ENCODE measurements at regions of chr15 and their contacts with region 1.

Region 1: DNA sequence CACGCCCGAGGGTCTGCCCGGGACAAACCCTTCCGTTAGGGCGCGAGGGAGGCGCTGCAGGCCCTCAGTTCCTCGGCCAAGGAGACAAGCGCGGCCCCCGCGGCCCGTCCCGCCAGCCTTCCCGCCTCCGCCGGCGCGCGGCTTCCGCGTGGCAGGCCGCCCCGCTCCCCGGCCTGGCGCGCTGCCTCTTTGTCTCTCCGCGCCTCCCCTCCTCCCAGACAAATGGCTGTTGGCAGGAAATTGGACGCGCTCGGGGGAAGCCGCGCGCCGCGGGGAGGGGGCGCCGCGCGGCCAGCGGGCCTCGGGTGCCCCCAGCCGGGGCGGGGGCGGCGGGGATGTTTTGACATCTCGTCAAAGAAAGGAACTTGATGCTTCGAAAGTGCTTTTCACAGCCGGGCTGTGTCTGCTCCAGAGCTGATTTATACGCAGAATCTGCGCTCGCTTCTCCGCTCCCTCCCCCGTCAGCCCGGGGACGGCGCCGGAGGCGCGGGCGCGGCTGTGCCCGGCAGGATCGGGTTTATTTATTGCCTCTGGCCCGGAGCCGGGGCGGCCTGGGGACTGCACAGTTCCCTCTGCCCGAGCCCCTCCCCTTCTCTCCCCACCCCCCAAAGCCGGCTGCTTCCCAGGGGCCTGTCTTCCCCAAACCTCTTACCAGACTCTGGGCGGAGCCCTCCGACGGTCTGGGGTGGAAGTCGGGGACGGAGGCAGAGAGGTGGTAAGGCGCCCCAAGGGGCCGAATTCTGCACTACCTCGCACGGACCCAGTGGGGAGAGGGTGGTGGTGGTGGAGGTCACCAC is 20.7 kb downstream of the SHF start:
- DNase-seq: peak; percentile 59 to 89 (median 77)
- H3K4me3 ChIP-seq: peak overlapping the region; percentile 59 to 91 (median 75)
- H3K27ac ChIP-seq: peak overlapping the region; percentile 96 to 100 (median 99)
- H3K27me3 ChIP-seq: no peaks in the 10 kb centered on the region
- CTCF ChIP-seq: peak in 54 of 56 donors; percentile 18 to 70 (median 48)

Region 2: GRCh38 chr15:44775953-44776352 is 391.1 kb before region 1 on chr15:
- intact Hi-C with region 1: no loop called
- DNase-seq: peak in 9 of 10 donors; percentile 49 to 84 (median 64)
- H3K4me3 ChIP-seq: peak overlapping the region in 8 of 59 donors; percentile 8 to 32 (median 16)
- H3K27ac ChIP-seq: peak overlapping the region in 56 of 59 donors; percentile 1 to 89 (median 66)
- H3K27me3 ChIP-seq: no peaks in the 10 kb centered on the region
- CTCF ChIP-seq: peak in 3 of 56 donors; percentile 7 to 19 (median 12)

Region 3: GRCh38 chr15:45156744-45157455 is 10.1 kb before region 1 on chr15:
- intact Hi-C with region 1: no loop called
- DNase-seq: no peak
- H3K4me3 ChIP-seq: no peak overlapping the region
- H3K27ac ChIP-seq: peak overlapping the region in 58 of 59 donors; percentile 38 to 92 (median 80)
- H3K27me3 ChIP-seq: no peaks in the 10 kb centered on the region
- CTCF ChIP-seq: no peak

Region 4: DNA sequence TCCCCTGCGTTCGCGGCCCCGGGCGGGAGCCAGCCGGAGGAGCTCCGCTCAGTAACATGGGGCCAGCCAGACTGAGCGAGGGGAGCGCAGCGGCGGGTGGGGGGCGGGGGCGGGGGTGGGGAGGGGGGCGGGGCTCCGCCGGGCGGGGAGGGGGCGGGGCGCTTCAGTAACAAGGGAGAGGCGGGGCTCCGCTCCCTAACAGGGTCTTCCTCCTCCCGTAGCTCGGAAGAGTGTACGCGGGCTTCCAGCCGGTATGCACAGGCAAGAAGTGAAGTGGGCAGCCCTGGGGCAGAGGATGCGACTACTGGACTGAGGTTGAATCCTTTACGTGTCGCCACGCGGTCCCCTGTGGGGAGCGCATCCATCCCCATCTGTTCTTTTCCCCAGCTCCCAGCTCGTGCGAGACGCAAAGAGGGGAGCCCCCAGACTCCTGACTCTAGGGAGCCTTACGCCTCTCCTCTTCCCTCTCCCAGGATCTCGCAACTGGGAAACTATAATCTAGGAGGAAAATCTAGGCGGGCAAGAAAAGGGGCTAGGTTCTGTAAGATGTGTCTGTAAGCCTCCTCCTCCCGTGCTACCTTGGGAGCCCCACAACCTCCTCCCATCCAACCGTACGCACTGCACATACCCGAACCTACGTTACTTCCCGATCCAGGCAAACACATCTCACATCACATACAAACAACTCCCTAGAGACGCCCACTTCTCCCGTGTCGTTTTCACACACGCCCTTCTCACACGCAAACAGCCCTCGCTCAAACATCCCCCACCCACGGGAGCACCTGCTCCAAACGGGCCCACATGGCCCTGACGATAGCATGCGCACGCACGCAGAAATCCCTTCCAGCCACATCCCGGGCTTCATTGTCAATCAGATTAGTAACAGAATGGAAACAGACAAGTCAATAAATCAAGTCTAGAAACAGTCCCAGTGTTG is 21.1 kb after region 1 on chr15 and contains the start of gene SHF:
- intact Hi-C with region 1: loop called in 1 of 2 experiments (anchors 2 kb)
- DNase-seq: peak in 8 of 10 donors; percentile 56 to 76 (median 72)
- H3K4me3 ChIP-seq: peak within 1 kb of the TSS; percentile 58 to 99 (median 79)
- H3K27ac ChIP-seq: peak within 1 kb of the TSS; percentile 39 to 93 (median 83)
- H3K27me3 ChIP-seq: no peaks in the 10 kb centered on the region
- CTCF ChIP-seq: no peak
- total RNA-seq, gene SHF: 13.9 to 56.0 (median 31.7) TPM

Region 5: DNA sequence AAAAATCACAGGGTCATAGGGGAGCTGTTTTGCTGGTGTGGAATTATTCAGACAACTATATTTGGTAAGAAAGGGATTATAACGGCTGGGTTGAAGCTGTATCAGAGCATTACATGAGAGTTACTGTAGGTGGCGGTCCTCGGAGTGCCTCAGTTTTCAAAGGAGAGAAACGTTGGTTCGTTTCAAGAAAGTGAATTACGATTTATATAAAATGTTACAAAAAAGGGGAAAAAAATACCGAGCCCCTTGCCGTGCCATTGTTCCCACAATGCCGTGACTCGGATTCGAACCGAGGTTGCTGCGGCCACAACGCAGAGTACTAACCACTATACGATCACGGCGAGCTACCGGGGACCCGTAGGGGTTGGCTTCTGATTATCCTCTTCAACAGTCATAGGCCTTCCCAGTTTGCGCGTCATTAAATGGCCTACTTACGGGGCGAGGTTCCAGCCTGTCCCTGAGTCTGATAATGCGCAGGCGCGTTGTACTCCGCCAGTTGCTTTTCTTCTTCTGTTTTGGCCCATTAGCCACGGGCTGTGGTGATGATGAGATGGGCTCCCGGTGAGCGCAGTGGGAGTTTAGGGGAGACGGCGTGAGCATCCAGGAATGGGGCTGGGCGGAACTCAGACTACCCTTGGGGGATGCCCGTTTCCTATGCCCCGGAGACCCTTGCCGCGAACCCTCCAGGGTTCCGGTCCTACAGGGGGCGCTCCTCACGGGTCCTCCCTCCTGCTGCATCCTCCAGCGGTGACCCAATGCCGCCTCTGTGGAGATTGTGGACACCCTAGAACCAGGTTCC is 31.5 kb after region 1 on chr15:
- intact Hi-C with region 1: loop called (anchors 1 kb)
- DNase-seq: peak; percentile 90 to 98 (median 94)
- H3K4me3 ChIP-seq: peak overlapping the region; percentile 47 to 94 (median 76)
- H3K27ac ChIP-seq: peak overlapping the region; percentile 85 to 100 (median 99)
- H3K27me3 ChIP-seq: no peaks in the 10 kb centered on the region
- CTCF ChIP-seq: peak; percentile 57 to 91 (median 78)

Region 6: GRCh38 chr15:45279024-45279698 is 112.1 kb after region 1 on chr15:
- intact Hi-C with region 1: loop called (anchors 2 kb)
- DNase-seq: peak; percentile 96 to 99 (median 98)
- H3K4me3 ChIP-seq: peak overlapping the region; percentile 59 to 96 (median 79)
- H3K27ac ChIP-seq: peak overlapping the region; percentile 35 to 96 (median 88)
- H3K27me3 ChIP-seq: no peaks in the 10 kb centered on the region
- CTCF ChIP-seq: peak in 31 of 56 donors; percentile 4 to 57 (median 22)

Region 7: DNA sequence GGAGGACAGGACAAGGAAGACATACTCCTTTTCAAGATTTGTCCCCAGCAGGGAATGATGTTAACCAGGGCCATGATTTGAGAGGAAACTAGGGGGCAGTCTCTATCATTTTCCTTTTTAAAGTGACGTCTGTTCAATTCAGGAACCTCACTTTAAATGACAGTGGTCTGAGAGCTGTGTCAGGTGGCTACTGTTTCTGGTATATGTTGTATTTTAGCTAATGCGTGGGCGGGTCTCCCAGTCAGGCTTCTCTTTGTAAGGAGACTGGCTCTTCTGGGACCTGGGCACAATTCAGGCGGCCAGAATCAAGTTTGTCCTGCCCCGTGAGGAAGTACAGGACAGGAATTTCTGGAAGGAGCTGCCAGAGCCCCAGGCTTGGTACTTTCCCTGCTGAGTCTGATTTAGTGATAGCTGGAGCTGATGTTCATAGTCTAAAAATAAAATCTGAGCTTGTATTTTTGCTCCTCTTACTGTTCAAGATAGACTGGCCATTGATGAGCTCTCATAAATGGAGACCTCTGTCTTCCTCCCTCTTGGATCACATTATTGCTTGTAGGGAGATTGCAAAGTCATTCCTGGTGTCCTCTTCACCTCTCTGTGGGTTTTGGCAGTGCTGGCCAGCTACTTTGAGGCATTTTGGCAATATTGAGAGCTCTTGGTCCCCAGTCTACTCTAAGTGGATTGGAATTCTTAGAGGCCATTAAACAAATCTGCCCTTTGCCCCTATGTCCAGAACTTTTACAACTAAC is 493.4 kb after region 1 on chr15:
- intact Hi-C with region 1: no loop called
- DNase-seq: no peak
- H3K4me3 ChIP-seq: no peak overlapping the region
- H3K27ac ChIP-seq: peak overlapping the region in 5 of 59 donors; percentile 14 to 51 (median 34)
- H3K27me3 ChIP-seq: no peaks in the 10 kb centered on the region
- CTCF ChIP-seq: peak in 3 of 56 donors; percentile 8 to 26 (median 24)

Region 8: GRCh38 chr15:45780352-45780751 is 613.3 kb after region 1 on chr15:
- intact Hi-C with region 1: no loop called
- DNase-seq: no peak
- H3K4me3 ChIP-seq: no peak overlapping the region
- H3K27ac ChIP-seq: no peak overlapping the region
- H3K27me3 ChIP-seq: peaks cover 0 to 16% (median 0%) of the 10 kb centered on the region in 45 donors
- CTCF ChIP-seq: no peak